Ascending aorta (tissue), 2 donors: ENCODE measurements at regions of chr2 and their contacts with region 1.

Region 1: DNA sequence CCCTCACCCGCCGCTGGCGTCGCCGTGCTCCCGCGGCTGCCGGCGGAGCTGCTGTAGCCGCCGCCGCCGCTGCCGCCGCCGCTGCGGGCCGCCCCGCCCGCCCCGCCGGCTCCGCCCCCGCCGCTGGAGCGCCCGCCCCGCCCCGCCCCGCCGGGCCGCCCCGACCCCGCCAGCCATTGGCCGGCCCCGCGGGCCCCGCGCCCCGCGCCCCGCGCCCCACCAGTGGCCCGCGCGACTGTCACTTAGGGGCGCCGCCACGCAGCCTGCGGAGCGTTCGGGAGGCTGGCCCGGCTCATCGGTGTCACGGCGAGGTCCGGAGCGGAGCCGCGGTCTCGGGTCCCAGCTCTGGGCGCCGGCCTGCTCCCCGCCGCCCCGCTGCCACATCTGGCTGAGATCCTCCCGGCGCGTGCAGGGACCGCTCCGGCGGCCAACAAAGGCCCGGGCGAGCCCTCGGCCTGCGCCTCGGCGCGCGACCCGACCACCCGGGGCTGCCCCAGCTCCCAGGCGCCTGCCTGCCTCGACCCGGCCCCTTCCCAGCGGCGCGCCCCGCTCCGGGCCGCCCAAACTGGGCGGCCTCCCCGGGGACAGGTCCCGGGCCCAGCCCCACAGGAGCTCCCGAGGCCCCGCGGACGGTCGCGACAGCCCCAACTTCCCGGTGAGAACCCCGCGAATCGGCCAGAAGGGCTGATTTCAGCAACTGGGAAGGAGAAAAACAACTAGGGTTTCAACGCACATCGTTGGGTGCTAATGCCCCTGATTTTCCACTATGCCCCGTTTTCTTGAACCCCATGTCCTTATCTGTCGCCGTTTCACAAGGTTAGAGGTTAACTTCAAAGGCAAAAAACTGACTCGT is at the start of gene MGAT4A:
- DNase-seq: peak; percentile 28 to 88
- H3K4me3 ChIP-seq: peak within 1 kb of the TSS; percentile 94 to 100
- H3K27ac ChIP-seq: peak within 1 kb of the TSS; percentile 85 to 93
- H3K4me1 ChIP-seq: peaks cover 4 to 14% of the 10 kb centered on the region in 2 donors
- H3K27me3 ChIP-seq: no peaks in the 10 kb centered on the region
- CTCF ChIP-seq: no peak
- total RNA-seq, gene MGAT4A: 8.0 TPM

Region 2: DNA sequence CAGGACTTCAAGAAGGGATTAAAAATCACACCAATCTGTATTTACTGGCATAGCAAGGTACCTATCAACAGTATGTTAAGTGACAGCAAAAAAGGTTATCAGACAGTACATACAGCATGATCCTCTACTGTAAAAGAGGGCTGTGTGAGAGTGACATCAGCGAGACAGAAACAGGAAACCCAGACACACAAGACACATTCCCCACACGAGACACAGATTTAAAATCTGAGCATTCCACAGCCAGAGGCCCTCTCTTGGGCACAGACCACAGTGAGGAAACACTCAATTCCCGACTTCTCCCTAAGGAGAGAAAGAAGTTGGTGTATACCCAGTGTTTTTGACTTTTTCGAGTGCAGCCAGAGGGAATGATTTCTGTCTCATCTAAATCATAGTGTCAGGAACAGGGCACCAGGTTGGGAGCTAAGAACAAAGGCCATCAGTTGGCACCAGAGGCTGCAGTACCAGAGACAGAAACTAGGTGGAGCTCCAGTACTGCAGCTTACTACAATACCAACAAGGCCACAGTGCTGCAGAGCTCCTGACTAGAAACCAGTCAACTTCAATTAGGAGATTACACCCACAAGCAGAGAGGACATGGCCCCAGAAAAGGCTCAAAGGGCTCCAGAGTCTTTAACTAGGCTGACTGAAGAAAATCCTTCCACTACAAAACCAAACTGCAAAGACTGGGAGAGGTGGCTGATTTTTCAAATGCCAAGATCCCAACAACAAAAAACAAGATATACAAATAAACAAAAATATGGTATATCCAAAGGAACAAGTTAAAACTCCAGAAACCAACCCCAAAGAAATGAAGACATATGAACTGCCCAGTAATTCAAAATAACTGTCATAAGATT is 81.9 kb before region 1 on chr2:
- intact Hi-C with region 1: loop called (anchors 2 kb)
- DNase-seq: peak; percentile 40 to 91
- H3K4me3 ChIP-seq: no peak overlapping the region
- H3K27ac ChIP-seq: no peak overlapping the region
- H3K4me1 ChIP-seq: no peaks in the 10 kb centered on the region
- H3K27me3 ChIP-seq: no peaks in the 10 kb centered on the region
- CTCF ChIP-seq: peak; percentile 94 to 99 (median 97)

Region 3: GRCh38 chr2:98701230-98701629 is 30.0 kb before region 1 on chr2:
- intact Hi-C with region 1: loop called (anchors 1 kb)
- DNase-seq: no peak
- H3K4me3 ChIP-seq: no peak overlapping the region
- H3K27ac ChIP-seq: peak overlapping the region; percentile 67 to 82
- H3K4me1 ChIP-seq: peaks cover 2 to 33% of the 10 kb centered on the region in 2 donors
- H3K27me3 ChIP-seq: no peaks in the 10 kb centered on the region
- CTCF ChIP-seq: no peak

Region 4: GRCh38 chr2:98757904-98758421 is 26.7 kb after region 1 on chr2:
- intact Hi-C with region 1: loop called (anchors 2 kb)
- DNase-seq: peak in 1 of 2 donors; percentile 92
- H3K4me3 ChIP-seq: peak overlapping the region; percentile 14 to 46
- H3K27ac ChIP-seq: peak overlapping the region; percentile 11 to 43
- H3K4me1 ChIP-seq: peaks cover 0 to 11% of the 10 kb centered on the region in 2 donors
- H3K27me3 ChIP-seq: no peaks in the 10 kb centered on the region
- CTCF ChIP-seq: no peak

Region 5: DNA sequence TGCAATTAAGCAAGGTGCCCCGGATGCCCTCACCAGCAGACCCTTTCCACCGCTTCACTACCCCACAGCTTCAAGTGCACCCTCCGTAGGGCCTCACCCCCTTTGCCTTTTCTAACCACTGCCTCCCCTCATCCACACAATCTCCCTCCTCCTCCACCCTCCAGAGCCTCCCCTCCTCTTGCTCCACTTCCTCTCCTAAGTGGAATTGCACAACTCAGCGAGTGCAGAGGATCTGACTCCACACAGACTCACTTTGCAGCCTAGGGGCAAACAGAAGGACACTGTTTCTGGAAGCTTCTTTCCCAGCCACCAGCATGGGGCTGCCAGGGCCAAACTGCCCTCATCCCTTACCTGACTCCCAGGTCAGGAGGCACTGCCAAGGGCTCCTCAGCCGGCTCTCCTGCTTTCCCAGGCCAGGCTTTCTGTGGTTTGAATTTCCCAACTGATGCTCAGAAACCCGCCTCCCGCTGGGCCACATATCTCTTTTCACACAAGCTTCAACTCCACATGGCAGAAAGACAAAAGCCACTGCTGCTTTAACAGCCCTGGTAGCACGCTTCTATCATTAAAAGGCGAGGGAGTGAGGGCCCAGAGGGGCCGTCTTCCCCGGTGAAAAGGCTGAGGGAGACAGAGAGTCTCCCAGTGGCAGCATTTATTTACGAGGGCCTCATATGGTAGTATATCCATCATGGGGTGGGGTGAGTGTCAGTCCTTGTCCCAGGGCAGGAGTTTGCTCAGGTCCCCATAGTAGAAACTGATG is 74.3 kb after region 1 on chr2:
- intact Hi-C with region 1: loop called (anchors 2 kb)
- DNase-seq: peak in 1 of 2 donors; percentile 69
- H3K4me3 ChIP-seq: no peak overlapping the region
- H3K27ac ChIP-seq: peak overlapping the region; percentile 8 to 62
- H3K4me1 ChIP-seq: peaks cover 6 to 28% of the 10 kb centered on the region in 2 donors
- H3K27me3 ChIP-seq: no peaks in the 10 kb centered on the region
- CTCF ChIP-seq: no peak

Region 6: DNA sequence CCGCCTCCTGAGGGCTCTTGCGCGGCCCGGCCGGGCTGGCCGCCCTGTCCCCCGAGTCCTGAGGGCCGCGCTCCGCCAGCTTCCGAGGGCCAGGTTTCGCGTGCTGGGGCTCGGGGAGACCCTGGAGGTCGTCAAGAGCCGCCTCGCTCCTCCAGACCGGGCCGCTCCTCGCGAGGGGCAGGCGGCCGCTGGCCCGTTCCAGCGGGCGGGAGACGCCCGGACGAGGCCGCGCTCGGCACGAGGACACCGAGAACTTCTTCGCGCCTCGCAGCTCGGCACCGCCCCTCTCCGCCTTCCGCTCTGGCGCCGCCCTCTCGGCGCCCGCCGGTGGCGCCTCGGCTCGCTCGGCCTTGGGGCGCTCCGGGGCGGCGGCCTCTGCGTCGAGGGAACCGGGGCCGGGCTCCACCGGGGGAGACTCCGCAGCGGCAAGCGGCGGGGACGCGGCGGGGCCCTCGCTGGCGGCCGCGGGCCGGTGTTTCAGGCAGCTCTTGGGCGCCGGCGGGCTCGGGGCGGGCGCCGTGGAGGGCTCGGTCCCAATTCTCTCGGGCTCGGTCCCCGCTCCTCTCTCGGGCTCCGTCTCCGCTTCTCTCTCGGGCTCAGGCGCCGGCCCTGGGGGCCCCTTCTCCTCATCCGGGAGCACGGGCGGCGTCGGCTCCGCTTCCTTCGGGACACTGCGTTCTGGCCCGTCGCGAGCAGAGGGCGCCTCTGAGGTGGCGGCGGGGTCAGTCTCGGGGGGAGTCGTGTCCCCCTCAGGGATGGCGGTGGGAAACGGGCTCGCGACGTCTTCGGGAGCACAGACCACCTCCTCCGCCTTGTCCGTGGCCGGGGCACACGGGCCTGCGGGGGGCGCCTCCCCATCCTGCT is 91.3 kb after region 1 on chr2:
- intact Hi-C with region 1: loop called (anchors 5 kb)
- DNase-seq: peak in 1 of 2 donors; percentile 72
- H3K4me3 ChIP-seq: peak overlapping the region; percentile 62 to 67
- H3K27ac ChIP-seq: peak overlapping the region; percentile 69 to 86
- H3K4me1 ChIP-seq: peaks cover 3 to 10% of the 10 kb centered on the region in 2 donors
- H3K27me3 ChIP-seq: no peaks in the 10 kb centered on the region
- CTCF ChIP-seq: peak; percentile 3 to 63 (median 53)